ENCODE measurements at regions of chr3 and their contacts with region 1.

Region 1: DNA sequence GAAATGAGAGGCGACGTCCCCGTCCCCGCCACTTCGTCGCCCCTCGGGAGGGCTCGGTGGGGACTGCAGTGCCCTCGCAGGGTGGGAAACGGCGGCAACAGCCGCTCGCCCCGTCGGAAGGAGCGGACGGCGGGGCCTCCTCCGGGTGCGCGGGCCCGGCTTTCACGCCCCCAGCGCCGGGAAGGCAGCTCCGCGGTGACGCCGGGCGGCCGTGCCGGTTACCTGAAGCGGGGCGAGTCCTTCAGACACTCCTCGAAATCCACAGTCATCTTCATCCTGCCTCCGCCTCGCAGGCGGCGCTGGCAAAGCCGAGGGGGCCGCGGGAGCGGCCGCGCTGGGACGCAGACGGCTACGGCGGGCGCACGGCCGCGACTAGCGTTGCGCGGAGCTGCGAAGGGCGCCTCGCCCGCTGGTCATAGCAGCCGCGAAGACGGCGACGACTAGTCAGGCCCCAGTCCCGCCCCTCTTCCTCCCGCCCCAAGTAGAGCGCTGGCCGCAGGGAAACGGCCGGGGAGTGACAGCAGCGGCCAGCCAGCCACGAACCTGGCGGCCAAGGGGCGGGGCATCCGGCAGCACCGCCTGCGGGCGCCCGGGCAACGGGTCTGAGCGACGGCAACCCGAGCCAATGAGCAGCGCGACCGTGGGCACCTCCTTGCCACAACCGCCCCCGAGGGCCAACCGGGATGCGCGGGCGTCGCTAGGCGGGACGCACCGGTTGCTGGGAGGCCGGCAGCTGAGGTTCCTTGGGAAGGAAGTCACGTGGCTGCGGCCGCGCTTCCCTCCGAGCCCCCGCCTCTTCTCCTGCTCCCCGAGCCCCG is at the start of gene ACAP2:
- DNase-seq: peak; percentile 100
- H3K4me3 ChIP-seq: peak within 1 kb of the TSS; percentile 68 to 84 (median 73)
- H3K27ac ChIP-seq: peak within 1 kb of the TSS; percentile 86 to 93 (median 86)
- H3K4me1 ChIP-seq: peaks cover 17% of the 10 kb centered on the region in 2 donors
- H3K27me3 ChIP-seq: no peaks in the 10 kb centered on the region
- CTCF ChIP-seq: peak in 1 of 6 experiments; percentile 9
- POLR2A ChIP-seq: peak; percentile 83 to 97
- total RNA-seq, gene ACAP2: 61.7 to 685 (median 71.3) TPM

Region 2: DNA sequence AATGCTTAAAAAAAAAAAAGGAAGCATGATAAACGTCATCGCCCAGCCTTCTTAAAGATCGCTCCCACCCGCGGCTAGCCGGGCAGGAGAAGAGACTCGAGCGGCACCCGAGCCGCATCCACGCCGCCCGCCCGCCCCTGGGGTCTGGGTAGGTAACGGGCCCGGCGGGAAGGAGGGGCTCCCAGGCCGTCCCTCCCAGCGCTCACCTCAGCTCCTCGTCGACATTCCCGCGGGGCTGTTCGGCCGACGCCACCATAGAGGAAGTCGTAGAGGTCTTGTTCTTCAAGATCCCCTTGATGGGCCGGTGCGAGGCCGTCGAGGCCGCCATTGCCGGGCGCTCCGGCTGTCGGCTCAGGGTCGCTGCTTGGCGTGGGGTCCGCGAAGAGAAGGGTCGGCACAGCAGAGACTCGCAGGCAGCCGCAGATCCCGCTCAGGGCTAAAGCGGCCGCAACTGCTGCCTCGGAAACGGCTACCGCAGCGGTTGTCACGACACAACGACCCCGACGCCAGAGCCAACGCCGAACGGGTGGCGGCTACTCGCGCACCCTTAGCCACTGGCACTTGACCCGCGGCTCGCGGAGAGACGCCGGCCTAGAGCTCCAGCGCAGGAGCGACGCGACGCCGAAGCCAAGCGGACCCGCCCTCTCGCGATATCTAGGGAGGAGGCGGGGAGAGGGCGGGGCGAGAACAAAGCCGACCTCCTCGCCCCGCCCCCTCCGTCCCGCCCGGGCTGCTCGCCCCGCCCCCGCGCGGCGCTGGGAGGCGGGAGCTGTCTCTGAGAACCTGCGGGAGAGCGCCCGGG is 100.1 kb after region 1 on chr3 and contains the start of gene PPP1R2:
- intact Hi-C with region 1: loop called (anchors 5 kb)
- DNase-seq: peak; percentile 91 to 93
- H3K4me3 ChIP-seq: peak within 1 kb of the TSS; percentile 74 to 96 (median 95)
- H3K27ac ChIP-seq: peak within 1 kb of the TSS; percentile 83 to 88 (median 86)
- H3K4me1 ChIP-seq: peaks cover 31 to 55% of the 10 kb centered on the region in 2 donors
- H3K27me3 ChIP-seq: no peaks in the 10 kb centered on the region
- CTCF ChIP-seq: no peak
- POLR2A ChIP-seq: peak; percentile 93 to 97
- total RNA-seq, gene PPP1R2: 76.2 to 113 (median 99.9) TPM